Heart left ventricle (tissue), 16 donors: ENCODE measurements at regions of chr4 and their contacts with region 1.

Region 1: DNA sequence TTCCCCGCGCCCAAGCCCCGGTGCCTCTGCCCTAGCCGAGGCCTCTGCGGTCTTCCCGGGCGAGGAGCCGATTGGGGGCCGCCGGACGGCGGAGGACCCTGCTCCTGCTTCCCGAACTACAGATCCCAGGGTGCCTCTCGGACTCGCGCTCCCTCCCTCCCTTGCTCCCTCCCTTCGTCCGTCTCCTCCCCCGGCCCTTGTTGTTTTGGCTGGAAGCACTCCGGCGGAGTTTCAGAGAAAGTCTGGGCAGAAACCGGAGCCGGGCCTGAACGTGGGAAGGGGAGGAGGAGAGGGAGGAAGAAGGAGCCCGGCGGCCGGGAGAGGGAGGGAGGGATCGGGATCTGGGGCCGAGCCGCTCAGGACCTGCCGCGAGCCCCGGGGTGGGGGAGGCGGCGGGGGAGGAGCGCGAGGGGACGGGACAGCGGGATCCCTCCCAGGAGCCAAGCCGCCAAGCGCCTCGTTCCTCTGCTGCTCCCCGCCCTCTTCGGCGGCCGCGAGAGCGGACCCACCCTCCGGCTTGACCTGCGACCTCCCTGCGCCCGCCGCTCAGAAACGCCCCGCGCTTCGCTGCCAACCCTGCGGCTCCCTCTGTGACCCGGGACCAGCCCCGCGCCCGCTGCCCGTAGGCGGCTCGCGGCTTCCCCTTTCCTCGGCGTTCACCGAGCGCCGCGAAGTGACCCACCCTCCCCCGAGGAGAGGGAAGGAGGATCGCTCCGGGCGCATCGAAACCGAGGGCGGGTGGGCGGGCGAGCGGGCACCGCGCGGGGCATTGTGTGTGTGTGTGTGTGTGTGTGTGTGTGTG is 496 bp upstream of the GAB1 start:
- DNase-seq: peak; percentile 92 to 94 (median 94)
- ATAC-seq: peak; percentile 86 to 94 (median 91)
- H3K4me3 ChIP-seq: peak overlapping the region; percentile 64 to 99 (median 94)
- H3K27ac ChIP-seq: peak overlapping the region in 11 of 12 donors; percentile 91 to 99 (median 95)
- H3K4me1 ChIP-seq: peaks cover 0 to 42% (median 21%) of the 10 kb centered on the region in 12 donors
- H3K27me3 ChIP-seq: no peaks in the 10 kb centered on the region
- CTCF ChIP-seq: peak in 3 of 12 donors; percentile 16 to 36 (median 28)
- POLR2A ChIP-seq: peak in 1 of 2 donors; percentile 54

Region 2: GRCh38 chr4:143224255-143224654 is 111.9 kb before region 1 on chr4:
- intact Hi-C with region 1: loop called in 3 of 10 experiments (anchors 5 to 10 kb)
- DNase-seq: peak in 1 of 5 donors; percentile 9
- ATAC-seq: peak; percentile 55 to 90 (median 66)
- H3K4me3 ChIP-seq: no peak overlapping the region
- H3K27ac ChIP-seq: peak overlapping the region in 5 of 12 donors; percentile 32 to 57 (median 38)
- H3K4me1 ChIP-seq: peaks cover 0 to 27% (median 9%) of the 10 kb centered on the region in 12 donors
- H3K27me3 ChIP-seq: no peaks in the 10 kb centered on the region
- CTCF ChIP-seq: no peak
- POLR2A ChIP-seq: no peak

Region 3: DNA sequence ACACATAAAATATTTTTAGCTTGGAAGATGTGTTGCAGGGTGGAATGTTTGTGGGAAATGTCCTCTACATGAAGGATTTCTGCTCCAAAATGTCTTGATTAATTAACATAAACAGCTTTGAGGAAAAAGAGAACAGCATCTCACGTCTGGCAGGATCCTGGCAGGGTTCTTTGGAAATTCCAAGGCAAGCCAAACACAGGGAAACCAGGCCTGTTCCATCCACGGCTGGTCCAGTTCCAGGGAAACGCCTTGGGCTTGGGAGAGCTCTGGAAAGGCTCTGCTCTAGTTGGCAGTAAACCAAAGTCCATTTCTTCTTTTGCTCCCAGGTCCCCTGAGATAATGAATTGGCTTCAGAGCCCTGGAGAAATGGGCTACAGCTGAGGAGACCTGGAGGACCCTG is 41.9 kb before region 1 on chr4:
- intact Hi-C with region 1: loop called in 7 of 10 experiments (anchors 5 to 10 kb)
- DNase-seq: peak; percentile 75 to 91 (median 86)
- ATAC-seq: peak; percentile 63 to 93 (median 92)
- H3K4me3 ChIP-seq: no peak overlapping the region
- H3K27ac ChIP-seq: peak overlapping the region in 8 of 12 donors; percentile 4 to 54 (median 26)
- H3K4me1 ChIP-seq: peaks cover 0 to 28% (median 12%) of the 10 kb centered on the region in 12 donors
- H3K27me3 ChIP-seq: no peaks in the 10 kb centered on the region
- CTCF ChIP-seq: no peak
- POLR2A ChIP-seq: no peak

Region 4: DNA sequence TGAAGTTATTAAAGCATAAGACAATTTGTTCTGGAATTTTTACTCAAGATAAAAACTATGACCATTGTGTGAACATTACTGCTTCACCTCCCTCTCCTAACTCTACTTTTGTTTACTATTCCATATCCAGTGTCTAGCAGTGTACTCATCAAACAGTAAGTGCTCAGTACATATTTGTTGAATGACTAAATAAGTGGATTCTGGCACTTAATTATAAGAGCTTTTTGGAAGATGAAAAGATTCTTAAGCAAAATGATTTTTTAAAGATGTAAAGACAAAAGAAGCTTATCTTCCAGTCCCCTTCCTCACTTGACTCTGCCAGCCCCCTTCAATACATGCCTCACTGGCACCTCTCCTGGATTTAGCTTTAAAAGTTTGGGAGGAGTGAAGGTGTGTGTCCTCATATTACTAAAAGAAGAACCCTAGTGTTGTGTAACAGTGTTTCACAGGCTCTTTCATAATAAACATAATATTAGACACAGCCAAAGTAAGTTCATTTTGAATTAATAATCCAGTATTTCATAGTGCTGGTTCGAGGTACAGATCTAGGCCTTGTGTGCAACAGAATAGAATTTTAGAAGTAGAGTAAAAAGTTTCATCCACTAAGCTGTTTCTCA is 53.5 kb after region 1 on chr4:
- intact Hi-C with region 1: loop called in 4 of 10 experiments (anchors 5 to 10 kb)
- DNase-seq: no peak
- ATAC-seq: peak in 3 of 4 donors; percentile 8 to 45 (median 43)
- H3K4me3 ChIP-seq: no peak overlapping the region
- H3K27ac ChIP-seq: peak overlapping the region in 9 of 12 donors; percentile 3 to 70 (median 53)
- H3K4me1 ChIP-seq: peaks cover 0 to 98% (median 79%) of the 10 kb centered on the region in 12 donors
- H3K27me3 ChIP-seq: no peaks in the 10 kb centered on the region
- CTCF ChIP-seq: no peak
- POLR2A ChIP-seq: no peak

Region 5: GRCh38 chr4:143473334-143474126 is 137.3 kb after region 1 on chr4:
- intact Hi-C with region 1: loop called in 2 of 10 experiments (anchors 10 kb)
- DNase-seq: no peak
- ATAC-seq: peak in 1 of 4 donors; percentile 17
- H3K4me3 ChIP-seq: no peak overlapping the region
- H3K27ac ChIP-seq: no peak overlapping the region
- H3K4me1 ChIP-seq: no peaks in the 10 kb centered on the region
- H3K27me3 ChIP-seq: no peaks in the 10 kb centered on the region
- CTCF ChIP-seq: no peak
- POLR2A ChIP-seq: no peak